ENCODE measurements at regions of chr11 and their contacts with region 1.

Region 1: DNA sequence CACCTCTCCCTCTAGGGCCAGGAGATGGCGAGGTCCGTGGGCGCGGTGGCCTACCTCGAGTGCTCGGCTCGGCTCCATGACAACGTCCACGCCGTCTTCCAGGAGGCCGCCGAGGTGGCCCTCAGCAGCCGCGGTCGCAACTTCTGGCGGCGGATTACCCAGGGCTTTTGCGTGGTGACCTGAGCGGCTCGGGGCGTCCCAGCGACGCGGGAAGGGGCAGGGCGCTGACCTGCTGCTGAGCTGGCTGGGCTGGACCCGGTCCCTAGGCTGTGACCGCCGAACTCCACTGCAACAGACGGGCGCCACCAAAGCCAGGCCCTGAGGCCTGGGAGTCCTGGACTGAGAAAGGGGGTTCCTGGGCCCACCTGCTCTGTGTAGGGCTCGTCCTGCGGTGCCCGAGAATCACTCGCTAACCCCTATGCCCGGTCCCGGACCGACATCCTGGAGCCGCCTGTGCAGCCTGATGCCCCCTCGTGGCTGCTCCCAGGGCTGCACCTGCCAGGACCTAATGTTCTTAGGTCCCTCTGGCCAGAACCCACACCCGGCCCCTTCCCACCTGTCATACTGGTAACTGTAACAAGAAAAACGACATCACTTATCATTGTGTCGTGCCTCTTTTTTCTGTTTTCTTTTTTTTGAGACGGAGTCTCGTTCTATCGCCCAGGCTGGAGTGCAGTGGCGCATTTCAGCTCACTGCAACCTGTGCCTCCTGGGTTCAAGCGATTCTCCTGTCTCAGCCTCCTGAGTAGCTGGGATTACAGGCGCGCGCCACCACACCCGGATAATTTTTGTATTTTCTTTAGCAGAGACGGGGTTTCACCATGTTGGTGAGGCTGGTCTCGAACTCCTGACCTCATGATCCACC is 15.0 kb downstream of the RHOD start:
- DNase-seq: peak; percentile 55
- ATAC-seq: peak; percentile 98
- H3K4me3 ChIP-seq: no peak overlapping the region
- H3K27ac ChIP-seq: no peak overlapping the region
- H3K4me1 ChIP-seq: no peaks in the 10 kb centered on the region
- H3K27me3 ChIP-seq: no peaks in the 10 kb centered on the region
- CTCF ChIP-seq: peak; percentile 80
- POLR2A ChIP-seq: no peak
- RAD21 ChIP-seq: peak; percentile 75

Region 2: DNA sequence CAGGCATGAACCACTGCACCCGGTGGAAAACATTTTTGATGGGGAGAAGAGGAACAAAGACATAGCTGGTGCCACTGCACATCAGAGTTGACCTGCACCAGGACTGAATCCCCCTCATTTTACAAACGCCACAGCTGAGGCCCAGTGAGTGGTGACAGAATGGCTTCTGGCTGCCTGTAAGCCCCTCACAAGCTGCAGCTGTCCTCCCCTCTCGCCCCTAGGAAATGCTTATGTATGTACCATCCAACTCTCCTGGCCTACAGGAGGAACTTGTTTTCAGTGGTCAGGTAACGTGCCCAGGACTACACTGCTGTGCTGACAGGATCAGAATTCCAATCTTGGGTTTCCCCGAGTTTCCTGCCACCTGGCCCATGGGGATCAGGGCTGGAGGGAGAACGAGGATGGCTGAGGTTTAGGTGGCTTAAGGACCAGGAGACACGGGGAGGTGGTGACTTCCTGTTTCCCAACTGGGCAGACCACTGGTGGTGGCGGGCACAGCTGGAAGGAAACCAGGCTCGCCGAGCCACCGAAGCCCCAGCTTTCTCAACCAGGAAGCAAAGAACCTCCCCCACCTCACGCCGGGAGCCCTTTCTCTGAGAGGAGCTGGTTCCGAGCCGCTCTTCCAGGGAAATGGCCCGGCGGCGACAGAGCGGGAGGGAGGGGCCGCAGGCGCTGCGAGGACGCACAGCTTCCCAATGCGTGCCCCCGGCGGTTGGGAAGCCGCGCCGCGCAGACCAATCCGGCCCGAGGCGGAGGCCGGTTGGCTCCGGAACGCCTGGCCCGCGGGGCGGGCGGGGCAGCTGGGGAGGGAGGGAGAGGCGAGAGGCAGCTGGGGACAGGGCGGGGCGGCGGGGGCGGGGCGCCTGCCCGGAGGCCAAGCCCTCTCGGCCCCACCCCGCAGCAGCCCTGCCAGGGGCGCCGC is 215.8 kb before region 1 on chr11:
- CTCF ChIA-PET with region 1: no interaction called
- POLR2A ChIA-PET with region 1: no interaction called
- dilution Hi-C with region 1: no loop called
- in situ Hi-C with region 1: no loop called
- intact Hi-C with region 1: loop called (anchors 1 kb)
- DNase-seq: peak; percentile 84
- ATAC-seq: peak; percentile 95
- H3K4me3 ChIP-seq: peak overlapping the region; percentile 57
- H3K27ac ChIP-seq: peak overlapping the region; percentile 78
- H3K4me1 ChIP-seq: peaks cover 4% of the 10 kb centered on the region
- H3K27me3 ChIP-seq: no peaks in the 10 kb centered on the region
- CTCF ChIP-seq: 0 out of 2 replicates have a peak, but pooled peaks have one; percentile 4
- POLR2A ChIP-seq: peak; percentile 78
- RAD21 ChIP-seq: no peak

Region 3: GRCh38 chr11:67006139-67006884 is 65.3 kb before region 1 on chr11:
- CTCF ChIA-PET with region 1: no interaction called
- POLR2A ChIA-PET with region 1: interaction called, 16 read pairs
- dilution Hi-C with region 1: no loop called
- in situ Hi-C with region 1: no loop called
- intact Hi-C with region 1: no loop called
- DNase-seq: no peak
- ATAC-seq: no peak
- H3K4me3 ChIP-seq: no peak overlapping the region
- H3K27ac ChIP-seq: no peak overlapping the region
- H3K4me1 ChIP-seq: no peaks in the 10 kb centered on the region
- H3K27me3 ChIP-seq: no peaks in the 10 kb centered on the region; the same call in 1 of the 2 replicates
- CTCF ChIP-seq: no peak
- POLR2A ChIP-seq: no peak
- RAD21 ChIP-seq: no peak